Dendritic cell treated with granulocyte-macrophage colony-stimulating factor and Interleukin-4, amounts not matched to agents 40 ng/mL and 50 ng/mL, for 4 days (primary cell): ENCODE measurements at regions of chr19 and their contacts with region 1.

Region 1: DNA sequence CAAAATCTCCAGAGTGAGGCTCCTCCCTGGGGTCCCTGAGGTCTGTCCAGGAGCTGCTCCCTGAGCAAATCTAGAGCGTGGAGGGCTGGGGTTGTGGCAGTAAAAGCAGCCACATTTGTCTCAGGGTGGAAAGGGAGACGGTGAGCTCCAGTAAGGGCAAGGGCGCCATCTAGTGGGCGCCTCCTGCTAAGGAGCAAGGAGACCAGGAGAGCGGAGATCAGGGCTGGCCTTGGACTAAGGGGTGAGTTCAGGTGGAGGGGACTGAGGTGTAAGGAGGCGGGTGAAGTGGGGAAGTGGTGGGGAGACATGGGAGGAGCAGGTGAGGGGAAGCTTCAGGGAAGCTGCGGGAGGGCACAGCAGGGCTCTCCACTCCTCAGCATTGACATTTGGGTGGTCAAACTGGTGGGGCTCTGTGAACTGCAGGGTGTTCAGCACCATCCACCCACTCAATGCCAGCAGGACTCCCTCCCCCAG is 5.3 kb upstream of the CEACAM21 start:
- H3K4me3 Mint-ChIP-seq: no peak overlapping the region
- H3K27ac Mint-ChIP-seq: no peak overlapping the region
- H3K4me1 Mint-ChIP-seq: peaks cover 12% of the 10 kb centered on the region
- H3K27me3 Mint-ChIP-seq: peaks cover 25% of the 10 kb centered on the region

Region 2: GRCh38 chr19:41431426-41432386 is 139.0 kb before region 1 on chr19:
- intact Hi-C with region 1: no loop called
- H3K4me3 Mint-ChIP-seq: no peak overlapping the region
- H3K27ac Mint-ChIP-seq: peak overlapping the region; percentile 54
- H3K4me1 Mint-ChIP-seq: peaks cover 52% of the 10 kb centered on the region
- H3K27me3 Mint-ChIP-seq: no peaks in the 10 kb centered on the region

Region 3: DNA sequence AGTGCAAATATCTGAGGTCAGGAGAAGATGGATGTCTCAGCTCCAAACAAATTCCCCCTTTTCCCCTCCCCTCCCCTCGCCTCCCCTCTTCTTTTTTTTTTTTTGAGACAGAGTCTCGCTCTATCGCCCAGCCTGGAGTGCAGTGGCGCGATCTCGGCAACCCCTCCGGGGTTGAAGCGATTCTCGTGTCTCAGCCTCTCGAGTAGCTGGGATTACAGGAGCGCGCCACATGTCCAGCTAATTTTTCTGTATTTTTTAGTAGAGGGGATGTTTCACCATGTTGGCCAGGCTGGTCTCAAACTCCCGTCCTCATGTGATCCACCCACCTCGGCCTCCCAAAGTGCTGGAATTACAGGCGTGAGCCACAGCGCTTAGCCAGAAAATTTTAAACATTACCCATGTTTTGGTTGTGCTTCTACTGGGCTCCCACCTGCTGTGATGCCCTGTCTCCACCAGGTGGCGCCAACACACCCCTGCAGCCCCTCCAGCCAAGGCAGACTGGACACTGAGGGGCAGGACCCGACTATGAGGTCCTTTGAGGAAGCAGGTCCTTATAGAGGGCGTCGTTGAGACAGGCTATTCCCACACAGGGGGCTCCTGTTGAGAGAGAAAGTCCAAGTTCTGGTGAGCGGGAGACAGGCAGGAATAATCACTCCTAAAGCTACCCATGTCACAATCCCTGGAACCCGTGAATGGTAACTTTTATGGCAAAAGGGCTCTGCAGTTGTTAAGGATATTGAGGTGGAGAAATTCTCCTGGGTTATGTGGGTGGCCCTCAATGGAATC is 121.4 kb before region 1 on chr19:
- intact Hi-C with region 1: loop called (anchors 1 kb)
- H3K4me3 Mint-ChIP-seq: peak overlapping the region; percentile 64
- H3K27ac Mint-ChIP-seq: peak overlapping the region; percentile 43
- H3K4me1 Mint-ChIP-seq: peaks cover 15% of the 10 kb centered on the region
- H3K27me3 Mint-ChIP-seq: peaks cover 32% of the 10 kb centered on the region

Region 4: DNA sequence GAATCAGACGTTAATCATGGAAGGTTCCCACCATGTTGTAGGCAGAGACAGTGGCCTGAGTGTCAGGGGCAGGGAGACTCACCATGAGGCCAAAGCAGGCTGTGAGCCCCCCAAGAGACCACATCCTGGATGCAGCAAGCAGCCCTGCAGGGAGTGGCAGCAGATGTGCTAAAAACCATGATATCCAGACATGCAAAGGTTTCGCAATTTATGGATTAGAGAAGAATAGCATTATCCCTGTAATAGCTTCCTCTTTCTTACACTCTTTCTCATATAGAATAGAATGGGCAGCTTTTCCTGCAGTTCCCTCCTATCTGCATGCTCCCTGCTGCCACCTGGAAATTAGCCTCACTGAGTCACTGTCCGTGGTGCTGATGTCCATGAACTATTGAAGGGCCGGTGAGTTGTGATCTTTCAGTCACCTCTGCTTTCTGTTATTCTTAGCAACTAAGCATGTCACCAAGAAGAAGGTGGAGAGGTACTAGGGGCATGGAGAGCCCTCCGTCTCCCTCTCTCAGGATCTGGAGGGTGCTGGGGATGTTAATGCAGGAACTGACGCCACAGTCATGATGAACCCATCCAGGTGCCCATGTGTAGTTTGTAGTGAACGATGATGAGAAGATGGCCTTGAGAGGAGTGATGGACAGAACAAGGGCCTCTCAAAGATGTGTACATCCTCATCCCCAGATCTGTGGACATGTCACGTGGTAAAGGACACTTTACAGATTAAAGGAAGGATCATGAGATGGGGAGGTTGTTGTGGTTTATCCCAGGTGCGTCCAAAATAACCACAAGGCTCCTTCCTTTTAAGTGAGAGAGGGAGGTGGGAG is 46.3 kb after region 1 on chr19:
- intact Hi-C with region 1: no loop called
- H3K4me3 Mint-ChIP-seq: no peak overlapping the region
- H3K27ac Mint-ChIP-seq: no peak overlapping the region
- H3K4me1 Mint-ChIP-seq: peaks cover 83% of the 10 kb centered on the region
- H3K27me3 Mint-ChIP-seq: no peaks in the 10 kb centered on the region